ENCODE measurements at regions of chr7 and their contacts with region 1.

Region 1: GRCh38 chr7:147496209-147496608 is 1094.4 kb upstream of the C7orf33 start:
- DNase-seq: no peak
- CTCF ChIP-seq: no peak

Region 2: GRCh38 chr7:147483634-147484292 is 12.4 kb before region 1 on chr7:
- CTCF ChIA-PET with region 1: interaction called, 13 read pairs
- POLR2A ChIA-PET with region 1: no interaction called
- DNase-seq: no peak
- CTCF ChIP-seq: no peak

Measured in GM10248 (cell line).